Spleen (tissue), 13 donors: ENCODE measurements at regions of chr18 and their contacts with region 1.

Region 1: GRCh38 chr18:3995476-3996102 is 459.5 kb downstream of the DLGAP1 start:
- DNase-seq: no peak
- H3K4me3 ChIP-seq: peak overlapping the region in 1 of 8 donors; percentile 17
- H3K27ac ChIP-seq: no peak overlapping the region
- H3K4me1 ChIP-seq: peaks cover 0 to 10% (median 0%) of the 10 kb centered on the region in 6 donors
- H3K27me3 ChIP-seq: no peaks in the 10 kb centered on the region
- CTCF ChIP-seq: peak; percentile 35 to 80 (median 65)
- POLR2A ChIP-seq: no peak

Region 2: DNA sequence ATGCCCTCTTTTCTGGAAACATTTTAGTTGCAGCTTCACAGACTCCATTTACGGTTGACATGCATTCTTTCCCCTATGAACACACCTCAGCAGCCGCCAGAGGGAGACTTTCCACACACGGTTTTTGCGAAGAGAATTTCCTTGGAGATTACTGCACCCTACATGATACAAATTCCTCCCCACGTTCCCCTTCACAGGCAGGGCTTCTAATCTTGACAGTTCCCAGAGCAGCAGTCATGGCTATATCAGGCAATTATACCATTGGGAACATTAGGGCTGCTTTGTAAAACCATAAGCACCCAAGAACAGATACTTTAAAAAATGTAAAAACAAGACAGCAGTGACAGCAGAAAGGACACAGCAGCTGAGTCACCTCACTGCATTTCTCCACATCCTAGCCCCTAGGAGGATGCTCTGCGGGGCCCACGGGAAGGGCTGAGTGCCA is 291.8 kb before region 1 on chr18:
- intact Hi-C with region 1: loop called (anchors 5 kb)
- DNase-seq: no peak
- H3K4me3 ChIP-seq: no peak overlapping the region
- H3K27ac ChIP-seq: no peak overlapping the region
- H3K4me1 ChIP-seq: peaks cover 0 to 22% (median 6%) of the 10 kb centered on the region in 6 donors
- H3K27me3 ChIP-seq: peaks cover 0 to 51% (median 0%) of the 10 kb centered on the region in 7 donors
- CTCF ChIP-seq: peak in 9 of 11 experiments; percentile 29 to 68 (median 57)
- POLR2A ChIP-seq: no peak

Region 3: DNA sequence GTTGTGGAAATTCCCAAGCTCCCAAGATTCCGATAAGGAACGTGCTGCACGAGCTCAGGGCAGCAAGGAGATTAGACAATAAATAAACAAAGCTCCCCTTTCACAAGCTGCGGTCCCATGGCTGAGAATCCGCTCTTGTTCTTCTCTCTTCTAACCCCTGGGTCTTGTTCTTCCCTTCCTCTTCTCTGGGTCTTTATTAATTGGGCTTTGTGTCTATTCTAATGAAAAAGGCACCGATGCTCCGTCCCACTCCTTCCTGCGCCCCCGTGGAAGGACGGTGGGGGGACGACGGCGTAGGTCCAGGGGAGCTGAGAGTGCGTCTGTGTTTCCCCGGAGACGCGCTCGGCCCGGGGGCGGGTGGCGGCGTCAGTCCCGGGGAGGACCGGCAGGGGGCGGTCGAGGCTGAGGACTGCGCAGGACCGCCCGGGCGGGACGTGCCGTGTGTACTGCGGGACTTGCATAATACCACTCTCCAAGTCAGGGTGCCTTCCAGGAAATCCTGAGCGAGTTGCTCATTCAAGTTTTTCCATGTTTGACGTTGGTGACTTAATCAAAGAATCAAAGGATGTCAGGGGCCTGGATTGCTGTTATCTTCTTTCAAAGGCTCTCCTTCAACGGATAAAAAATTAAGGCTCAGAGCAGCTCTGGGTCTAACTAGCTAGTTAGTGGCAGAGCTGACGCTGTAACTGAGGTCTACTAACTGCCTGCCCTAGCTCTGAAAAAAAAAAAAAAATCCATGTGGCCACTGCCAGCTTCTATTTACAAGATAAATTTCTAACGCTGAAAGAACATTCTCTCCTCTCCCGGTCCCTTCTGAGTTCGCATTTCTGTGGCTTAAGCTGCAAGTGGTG is 224.2 kb before region 1 on chr18:
- intact Hi-C with region 1: loop called (anchors 5 kb)
- DNase-seq: peak; percentile 93
- H3K4me3 ChIP-seq: peak overlapping the region in 3 of 8 donors; percentile 17 to 55 (median 21)
- H3K27ac ChIP-seq: peak overlapping the region in 2 of 8 donors; percentile 17 to 49
- H3K4me1 ChIP-seq: peaks cover 0 to 17% (median 10%) of the 10 kb centered on the region in 6 donors
- H3K27me3 ChIP-seq: peaks cover 0 to 21% (median 3%) of the 10 kb centered on the region in 7 donors
- CTCF ChIP-seq: peak; percentile 86 to 96 (median 92)
- POLR2A ChIP-seq: no peak

Region 4: GRCh38 chr18:3947383-3947782 is 48.2 kb before region 1 on chr18:
- intact Hi-C with region 1: no loop called
- DNase-seq: no peak
- H3K4me3 ChIP-seq: no peak overlapping the region
- H3K27ac ChIP-seq: no peak overlapping the region
- H3K4me1 ChIP-seq: no peaks in the 10 kb centered on the region
- H3K27me3 ChIP-seq: no peaks in the 10 kb centered on the region
- CTCF ChIP-seq: no peak
- POLR2A ChIP-seq: no peak